Left ventricle myocardium superior (tissue), 1 donor: ENCODE measurements at regions of chr1 and their contacts with region 1.

Region 1: DNA sequence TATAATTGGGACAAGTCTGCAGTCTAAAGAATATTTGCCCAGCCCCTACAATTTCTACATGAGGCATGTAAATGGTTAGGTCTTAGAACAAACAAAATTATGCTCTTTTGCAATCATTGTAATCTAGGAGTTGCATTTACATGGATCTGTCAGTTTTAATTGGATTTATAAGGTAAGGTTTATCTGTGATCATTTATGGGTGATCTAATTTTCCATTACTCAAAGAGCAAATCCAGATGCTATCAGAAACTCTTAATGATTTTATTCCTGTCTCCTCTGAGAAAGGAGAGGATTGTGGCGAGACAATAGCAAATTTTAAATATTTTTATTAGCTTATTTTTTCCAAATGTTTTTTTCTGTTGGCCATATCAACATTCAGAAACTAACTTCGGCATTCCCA is 14.1 kb upstream of the NEGR1 start:
- DNase-seq: no peak
- ATAC-seq: no peak

Region 2: DNA sequence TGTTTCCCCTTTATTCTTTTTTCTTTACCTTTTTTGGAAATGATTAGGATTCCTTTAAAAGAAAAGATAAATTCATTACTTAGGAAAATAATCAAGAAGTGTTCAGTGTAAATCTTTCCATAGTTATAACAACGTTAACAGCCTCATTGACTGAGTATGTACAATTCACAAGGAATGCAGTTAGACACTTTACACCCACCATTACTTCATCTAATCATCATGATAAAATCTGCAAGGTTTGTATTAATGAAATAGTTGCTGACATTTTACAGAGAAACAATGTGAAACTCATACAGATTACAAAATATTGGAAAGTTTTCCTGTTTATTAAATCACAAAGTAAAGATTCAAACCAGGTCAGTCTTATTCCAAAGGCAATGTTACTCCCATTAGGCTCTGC is 45.2 kb after region 1 on chr1:
- intact Hi-C with region 1: loop called (anchors 1 kb)
- DNase-seq: no peak
- ATAC-seq: no peak